K562 (cell line): ENCODE measurements at regions of chr4 and their contacts with region 1.

Region 1: DNA sequence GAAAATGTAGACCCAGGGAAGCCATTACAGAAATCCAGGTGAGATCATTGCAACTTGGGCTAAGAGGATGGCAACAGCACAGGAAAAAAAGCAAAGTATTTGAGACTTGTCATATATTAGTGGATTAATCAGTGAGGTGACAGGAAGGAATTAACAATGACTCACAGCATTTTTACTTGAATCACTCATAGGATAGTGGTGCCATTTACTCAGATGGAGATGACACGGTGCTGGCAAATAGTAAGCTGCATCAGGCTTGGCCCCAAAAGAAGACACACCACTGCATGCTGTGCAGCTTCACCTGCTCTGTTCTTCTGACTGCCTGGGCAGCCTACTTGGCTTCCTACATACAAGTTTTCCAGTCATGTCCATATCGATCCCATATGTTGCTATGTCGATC is 144.8 kb downstream of the FRYL start:
- DNase-seq: no peak
- ATAC-seq: peak; percentile 75
- H3K4me3 ChIP-seq: no peak overlapping the region
- H3K27ac ChIP-seq: no peak overlapping the region
- H3K4me1 ChIP-seq: peaks cover 0 to 5% of the 10 kb centered on the region in 2 experiments; a peak in 2 of 5 replicates
- H3K27me3 ChIP-seq: no peaks in the 10 kb centered on the region
- CTCF ChIP-seq: no peak
- EP300 ChIP-seq: no peak
- POLR2A ChIP-seq: no peak
- RAD21 ChIP-seq: no peak

Region 2: DNA sequence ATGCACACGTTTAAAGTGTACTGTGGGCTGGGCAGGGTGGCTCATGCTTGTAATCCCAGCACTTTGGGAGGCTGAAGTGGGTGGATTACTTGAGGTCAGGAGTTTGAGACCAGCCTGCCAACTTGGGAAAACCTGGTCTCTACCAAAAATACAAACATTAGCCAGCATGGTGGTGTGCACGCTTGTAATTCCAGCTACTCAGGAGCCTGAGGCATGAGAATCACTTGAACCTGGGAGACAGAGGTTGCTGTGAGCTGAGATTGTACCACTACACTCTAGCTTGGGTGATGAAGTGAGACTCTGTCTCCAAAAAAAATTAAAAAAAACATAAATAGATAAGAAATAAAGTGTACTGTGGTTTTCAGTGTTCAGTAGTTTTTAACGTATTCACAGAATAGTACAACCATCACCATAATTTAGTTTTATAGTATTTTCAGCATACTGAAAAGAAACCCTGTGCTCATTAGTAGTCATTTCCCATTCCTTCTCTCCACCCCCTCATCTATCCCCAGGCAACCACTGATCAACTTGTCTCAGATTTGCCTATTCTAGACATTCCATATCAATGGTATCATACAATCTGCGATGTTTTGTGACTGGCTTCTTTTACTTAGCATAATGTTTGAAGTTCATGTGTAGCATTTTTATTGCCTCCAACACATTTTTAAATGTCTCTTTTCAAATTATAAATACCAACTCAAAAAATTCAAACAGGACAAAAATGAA is 274.9 kb before region 1 on chr4:
- CTCF ChIA-PET with region 1: no interaction called
- POLR2A ChIA-PET with region 1: no interaction called
- in situ Hi-C with region 1: no loop called
- intact Hi-C with region 1: no loop called
- DNase-seq: no peak
- ATAC-seq: no peak
- H3K4me3 ChIP-seq: no peak overlapping the region
- H3K27ac ChIP-seq: no peak overlapping the region
- H3K4me1 ChIP-seq: no peaks in the 10 kb centered on the region
- H3K27me3 ChIP-seq: no peaks in the 10 kb centered on the region
- CTCF ChIP-seq: no peak
- EP300 ChIP-seq: no peak
- POLR2A ChIP-seq: no peak
- RAD21 ChIP-seq: no peak

Region 3: DNA sequence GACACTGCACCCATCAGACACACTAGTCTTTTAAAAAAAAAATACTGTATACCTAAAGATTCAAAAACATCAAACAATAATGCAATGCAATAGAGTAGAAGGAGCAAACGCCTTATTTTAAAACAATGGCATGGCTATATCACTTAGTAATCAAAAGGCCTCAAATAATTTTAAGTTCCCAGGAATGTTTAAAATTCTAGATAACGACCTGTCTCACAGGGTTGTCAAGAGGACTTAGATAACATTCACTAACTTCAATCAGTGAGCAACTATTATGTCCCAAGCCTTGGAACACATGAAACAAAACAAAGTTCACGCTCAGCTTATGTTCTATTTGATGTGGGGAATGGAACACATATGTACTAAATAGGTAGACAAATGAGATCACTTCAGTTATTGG is 38.2 kb after region 1 on chr4:
- CTCF ChIA-PET with region 1: no interaction called
- POLR2A ChIA-PET with region 1: no interaction called
- in situ Hi-C with region 1: loop called (anchors 5 kb)
- intact Hi-C with region 1: no loop called
- DNase-seq: no peak
- ATAC-seq: no peak
- H3K4me3 ChIP-seq: no peak overlapping the region
- H3K27ac ChIP-seq: no peak overlapping the region
- H3K4me1 ChIP-seq: peaks cover 0 to 3% of the 10 kb centered on the region in 2 experiments; a peak in 3 of 5 replicates
- H3K27me3 ChIP-seq: no peaks in the 10 kb centered on the region
- CTCF ChIP-seq: no peak
- EP300 ChIP-seq: no peak
- POLR2A ChIP-seq: no peak
- RAD21 ChIP-seq: no peak